Gastrocnemius medialis (tissue), 4 donors: ENCODE measurements at regions of chr5 and their contacts with region 1.

Region 1: DNA sequence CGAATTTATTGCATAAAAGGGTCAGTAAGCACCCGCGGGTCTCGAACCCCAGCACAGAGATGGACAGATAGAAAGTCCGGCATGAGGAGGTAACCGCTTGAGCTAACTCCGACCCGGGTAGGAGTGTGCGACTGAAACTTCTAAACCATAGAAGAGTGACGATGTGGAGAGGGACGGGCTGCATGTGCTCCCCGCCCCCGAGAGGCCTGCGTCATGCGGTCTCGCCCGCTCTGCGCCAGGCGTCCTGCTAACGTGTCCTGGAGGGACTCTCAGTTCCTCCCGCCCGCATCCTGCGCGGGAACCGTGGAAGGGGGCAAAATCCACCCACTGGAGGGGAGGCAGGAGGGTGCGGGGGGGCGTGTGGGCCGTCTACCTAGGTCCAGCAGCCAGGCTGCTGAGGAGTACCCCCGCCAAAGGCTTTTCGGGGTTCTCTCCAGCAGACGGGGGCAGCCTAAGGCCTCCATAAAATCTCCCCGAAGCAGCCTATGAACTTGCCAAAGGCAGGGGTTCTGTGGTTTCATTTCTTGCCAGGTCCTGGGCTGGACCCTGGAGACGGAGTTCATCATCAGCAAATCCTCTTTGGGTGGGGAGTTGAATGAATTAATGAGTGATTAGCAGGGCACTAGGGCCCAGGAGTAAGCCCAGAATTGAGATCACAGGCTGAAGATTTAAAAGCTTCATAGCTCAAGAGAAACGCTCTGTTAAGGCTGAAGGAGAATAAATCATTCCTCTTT is 51.9 kb downstream of the TGFBI start:
- DNase-seq: peak; percentile 56 to 61
- ATAC-seq: peak; percentile 59 to 69
- H3K4me3 ChIP-seq: peak overlapping the region; percentile 9 to 46 (median 35)
- H3K27ac ChIP-seq: peak overlapping the region; percentile 52 to 65 (median 60)
- H3K4me1 ChIP-seq: peaks cover 0 to 5% of the 10 kb centered on the region in 2 donors
- H3K27me3 ChIP-seq: no peaks in the 10 kb centered on the region
- CTCF ChIP-seq: no peak
- POLR2A ChIP-seq: peak; percentile 28 to 56

Region 2: DNA sequence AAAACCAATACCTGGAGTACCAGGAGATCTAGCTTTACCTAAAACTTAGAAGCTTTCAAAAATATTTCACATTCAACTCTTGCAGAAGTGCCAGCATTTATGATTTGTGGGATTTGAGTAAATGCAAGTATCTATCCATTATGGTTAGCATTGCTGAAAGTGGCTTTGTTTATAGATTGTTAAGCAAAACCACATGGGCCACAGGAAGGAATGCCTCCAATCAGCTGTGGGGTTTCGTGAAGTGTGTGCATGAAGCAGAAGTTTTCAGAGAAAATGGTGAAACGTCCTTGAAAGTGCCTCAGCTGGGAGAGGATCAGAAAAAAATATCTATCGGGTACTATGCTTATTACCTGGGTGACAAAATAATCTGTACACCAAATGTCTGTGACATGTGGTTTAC is 130.0 kb before region 1 on chr5:
- in situ Hi-C with region 1: loop called in 2 of 4 experiments (anchors 10 kb)
- intact Hi-C with region 1: loop called (anchors 2 kb)
- DNase-seq: no peak
- ATAC-seq: no peak
- H3K4me3 ChIP-seq: no peak overlapping the region
- H3K27ac ChIP-seq: no peak overlapping the region
- H3K4me1 ChIP-seq: no peaks in the 10 kb centered on the region
- H3K27me3 ChIP-seq: no peaks in the 10 kb centered on the region
- CTCF ChIP-seq: no peak
- POLR2A ChIP-seq: no peak

Region 3: DNA sequence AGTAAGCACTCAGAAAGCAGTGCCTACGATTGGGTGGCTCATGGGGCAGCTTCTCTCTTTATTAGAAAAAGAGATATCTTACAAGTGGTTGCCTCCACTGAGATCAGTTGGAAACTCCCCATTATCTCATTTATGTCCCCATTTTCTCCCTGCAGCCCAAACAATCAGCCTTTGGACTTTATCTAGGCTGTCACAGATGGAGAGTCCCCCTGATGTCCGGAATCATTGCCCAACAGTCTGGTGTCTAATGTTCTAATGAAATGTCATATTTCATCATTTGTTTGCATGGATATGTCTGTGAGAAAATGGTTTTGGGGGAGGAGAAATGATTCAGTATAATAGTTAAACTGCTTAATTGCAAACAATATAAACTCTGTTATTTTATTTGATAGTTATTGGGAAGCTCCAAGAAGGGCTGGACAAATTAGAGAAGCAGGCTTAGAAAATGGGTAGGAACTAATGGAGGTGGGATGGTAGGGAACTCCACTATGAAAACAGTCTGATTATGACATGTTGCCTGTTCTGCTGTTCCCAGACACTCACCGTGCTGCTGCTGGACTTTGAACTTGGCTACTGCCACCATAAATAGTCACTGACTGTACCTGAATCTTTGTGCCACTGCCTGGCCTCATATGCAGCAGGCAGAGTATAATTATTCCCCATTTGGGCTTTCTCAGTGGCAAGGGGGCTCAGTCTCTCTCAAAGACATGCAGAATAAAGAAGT is 13.7 kb after region 1 on chr5:
- in situ Hi-C with region 1: no loop called
- intact Hi-C with region 1: no loop called
- DNase-seq: no peak
- ATAC-seq: no peak
- H3K4me3 ChIP-seq: no peak overlapping the region
- H3K27ac ChIP-seq: no peak overlapping the region
- H3K4me1 ChIP-seq: no peaks in the 10 kb centered on the region
- H3K27me3 ChIP-seq: no peaks in the 10 kb centered on the region
- CTCF ChIP-seq: no peak
- POLR2A ChIP-seq: no peak

Region 4: DNA sequence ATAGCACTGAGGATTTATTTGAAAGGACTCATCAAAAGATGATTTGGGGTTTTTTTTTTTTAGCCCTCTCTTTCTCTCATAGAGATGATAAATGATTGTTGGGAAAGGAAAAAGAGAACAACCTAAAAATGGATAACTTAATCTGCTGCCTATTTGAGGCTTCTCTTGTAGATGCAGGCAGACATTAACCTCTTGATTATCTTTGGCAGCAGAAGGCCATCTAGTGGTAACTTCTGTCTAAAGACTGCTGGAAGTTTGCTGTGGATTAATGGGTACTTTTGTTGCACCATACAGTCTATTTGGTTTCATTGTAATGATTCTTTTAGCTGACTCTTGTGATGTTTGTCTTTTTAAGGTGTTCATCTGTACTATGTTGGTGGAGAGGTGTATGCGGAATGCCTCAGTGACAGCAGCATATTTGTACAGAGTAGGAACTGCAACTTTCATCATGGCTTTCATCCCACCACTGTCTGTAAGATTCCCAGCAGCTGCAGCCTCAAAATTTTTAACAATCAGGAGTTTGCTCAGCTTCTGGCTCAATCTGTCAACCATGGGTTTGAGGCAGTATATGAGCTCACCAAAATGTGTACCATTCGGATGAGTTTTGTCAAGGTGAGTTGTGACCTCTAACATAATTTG is 93.5 kb after region 1 on chr5:
- in situ Hi-C with region 1: no loop called
- intact Hi-C with region 1: loop called (anchors 5 kb)
- DNase-seq: no peak
- ATAC-seq: peak in 1 of 2 donors; percentile 36
- H3K4me3 ChIP-seq: no peak overlapping the region
- H3K27ac ChIP-seq: no peak overlapping the region
- H3K4me1 ChIP-seq: no peaks in the 10 kb centered on the region
- H3K27me3 ChIP-seq: no peaks in the 10 kb centered on the region
- CTCF ChIP-seq: peak in 4 of 5 experiments; percentile 34 to 54 (median 44)
- POLR2A ChIP-seq: no peak